ENCODE measurements at regions of chrX and their contacts with region 1.

Region 1: GRCh38 chrX:56281789-56282188 is 49.6 kb downstream of the KLF8 start:
- DNase-seq: peak; percentile 8
- ATAC-seq: peak; percentile 33; the same call in 1 of the 3 replicates
- H3K4me3 ChIP-seq: no peak overlapping the region
- H3K27ac ChIP-seq: no peak overlapping the region
- H3K4me1 ChIP-seq: no peaks in the 10 kb centered on the region
- H3K27me3 ChIP-seq: no peaks in the 10 kb centered on the region
- CTCF ChIP-seq: peak; percentile 55
- EP300 ChIP-seq: no peak
- POLR2A ChIP-seq: no peak
- RAD21 ChIP-seq: 0 out of 2 replicates have a peak, but pooled peaks have one; percentile 16

Region 2: GRCh38 chrX:56211701-56212100 is 70.1 kb before region 1 on chrX:
- CTCF ChIA-PET with region 1: no interaction called
- POLR2A ChIA-PET with region 1: no interaction called
- in situ Hi-C with region 1: no loop called
- intact Hi-C with region 1: no loop called
- DNase-seq: no peak
- ATAC-seq: no peak
- H3K4me3 ChIP-seq: no peak overlapping the region
- H3K27ac ChIP-seq: no peak overlapping the region
- H3K4me1 ChIP-seq: no peaks in the 10 kb centered on the region
- H3K27me3 ChIP-seq: no peaks in the 10 kb centered on the region
- CTCF ChIP-seq: no peak
- EP300 ChIP-seq: no peak
- POLR2A ChIP-seq: no peak
- RAD21 ChIP-seq: no peak

Region 3: DNA sequence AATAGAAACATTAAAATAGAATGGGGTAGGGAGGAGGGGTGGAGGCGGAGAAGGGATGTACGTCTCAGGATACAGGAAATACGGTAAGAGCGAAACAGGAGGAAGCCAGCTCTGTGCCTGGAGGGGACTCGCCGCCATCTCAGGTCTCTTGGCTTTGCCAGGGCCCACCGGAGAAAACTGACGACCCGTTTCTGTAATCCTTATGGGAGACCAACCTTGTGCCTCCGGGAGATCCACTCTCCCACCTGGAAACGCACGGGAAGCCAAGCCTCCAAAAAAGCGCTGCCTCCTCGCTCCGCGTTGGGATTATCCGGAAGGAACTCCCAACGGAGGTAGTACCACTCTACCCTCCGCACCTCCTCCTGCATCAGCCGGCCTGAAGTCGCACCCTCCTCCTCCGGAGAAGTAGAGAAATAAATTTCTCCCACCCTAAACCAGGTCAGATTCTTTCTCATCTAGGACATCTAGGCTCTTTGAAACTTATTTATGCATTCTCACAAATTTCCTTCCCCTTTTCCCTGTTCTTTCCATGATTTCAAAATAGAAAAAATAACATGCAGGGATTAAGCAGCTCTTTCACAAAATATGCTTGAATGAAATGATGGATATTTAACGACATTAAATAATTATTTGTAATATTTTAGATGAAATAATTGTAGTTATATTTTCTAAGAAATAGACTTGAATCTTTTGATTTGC is 447.5 kb after region 1 on chrX and contains the start of gene NBDY:
- CTCF ChIA-PET with region 1: interaction called, 9 read pairs
- POLR2A ChIA-PET with region 1: no interaction called
- in situ Hi-C with region 1: loop called (anchors 25 kb)
- intact Hi-C with region 1: loop called (anchors 1 kb)
- DNase-seq: no peak
- ATAC-seq: peak; percentile 47; the same call in 2 of the 3 replicates
- H3K4me3 ChIP-seq: peak within 1 kb of the TSS; percentile 45 to 66 (median 57); a peak in 5 of 6 replicates
- H3K27ac ChIP-seq: no peak within 1 kb of the TSS
- H3K4me1 ChIP-seq: no peaks in the 10 kb centered on the region
- H3K27me3 ChIP-seq: no peaks in the 10 kb centered on the region
- CTCF ChIP-seq: no peak
- EP300 ChIP-seq: no peak
- POLR2A ChIP-seq: no peak
- RAD21 ChIP-seq: no peak
- total RNA-seq, gene NBDY: 1.7 and 3.8 TPM in 2 replicates